Tibial artery (tissue), 4 donors: ENCODE measurements at regions of chr13 and their contacts with region 1.

Region 1: GRCh38 chr13:40922437-40923040 is 96.6 kb downstream of the ELF1 start:
- DNase-seq: no peak
- H3K4me3 ChIP-seq: no peak overlapping the region
- H3K27ac ChIP-seq: no peak overlapping the region
- H3K4me1 ChIP-seq: peaks cover 0 to 14% (median 5%) of the 10 kb centered on the region in 4 donors
- H3K27me3 ChIP-seq: no peaks in the 10 kb centered on the region
- CTCF ChIP-seq: no peak

Region 2: DNA sequence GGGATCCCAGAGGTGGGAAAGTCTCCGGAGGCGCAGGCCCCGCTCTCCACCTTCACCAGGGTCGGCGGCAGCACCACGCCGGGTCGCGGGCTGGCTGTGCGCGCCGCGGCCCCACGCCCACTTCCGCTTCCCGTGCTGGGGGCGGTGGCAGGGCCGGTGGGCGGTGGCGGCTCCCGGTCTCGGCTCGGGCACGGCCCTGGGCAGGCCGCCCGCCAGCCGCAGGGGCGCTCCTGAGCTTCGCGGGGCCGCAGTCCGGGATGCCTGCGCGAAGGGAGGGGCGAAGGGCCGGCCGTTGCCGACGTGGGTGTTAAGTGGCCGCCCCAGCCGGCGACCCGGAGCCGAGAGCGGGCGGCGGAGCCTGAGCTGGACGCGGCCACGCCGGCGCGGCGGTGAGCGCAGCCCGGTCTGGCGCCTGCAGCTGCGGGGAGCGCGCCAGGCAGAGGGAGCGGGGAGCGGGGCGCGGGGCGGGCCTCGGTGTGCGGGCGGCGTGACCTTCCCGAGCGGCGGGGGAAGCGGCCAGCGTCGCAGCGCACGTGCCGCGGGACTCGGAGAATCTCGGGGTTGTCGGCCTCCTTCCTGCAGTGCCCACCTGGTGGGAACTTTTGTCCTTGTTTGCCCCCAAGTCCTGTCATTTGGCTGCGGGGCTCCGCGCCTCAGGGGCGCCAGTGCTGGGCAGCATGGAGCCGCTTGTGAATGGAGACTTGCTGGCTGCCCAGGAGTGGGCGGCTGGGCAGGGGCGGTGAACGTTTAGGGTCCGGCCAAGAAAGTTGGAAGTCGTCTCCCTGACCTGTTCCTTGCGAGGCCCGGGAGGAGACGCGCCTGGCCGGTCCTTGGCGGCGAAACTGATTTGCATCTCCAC is 133.0 kb before region 1 on chr13 and contains the start of gene SLC25A15:
- intact Hi-C with region 1: loop called (anchors 10 kb)
- DNase-seq: peak; percentile 73 to 85
- H3K4me3 ChIP-seq: peak within 1 kb of the TSS; percentile 67 to 71
- H3K27ac ChIP-seq: peak within 1 kb of the TSS; percentile 80 to 83
- H3K4me1 ChIP-seq: peaks cover 0 to 13% (median 4%) of the 10 kb centered on the region in 4 donors
- H3K27me3 ChIP-seq: no peaks in the 10 kb centered on the region
- CTCF ChIP-seq: peak in 1 of 2 experiments; percentile 28

Region 3: DNA sequence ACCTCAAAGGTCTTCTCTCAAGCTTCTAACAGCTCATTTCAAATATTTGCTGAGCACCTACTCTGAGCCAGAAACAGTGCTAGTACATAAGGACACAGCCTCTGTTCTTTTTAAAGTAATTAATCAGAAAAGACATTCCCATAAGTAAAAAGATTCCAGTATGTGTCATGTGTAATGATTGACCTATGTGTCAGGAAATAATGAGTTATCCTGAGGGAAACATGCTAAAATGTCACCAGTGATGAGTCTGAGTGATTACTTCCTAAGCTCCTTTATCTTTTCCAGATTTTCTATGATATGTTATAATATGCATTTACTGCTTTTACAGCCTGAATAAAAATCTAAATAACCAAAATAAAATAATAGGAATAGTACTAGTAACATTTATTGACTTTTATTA is 25.5 kb before region 1 on chr13:
- intact Hi-C with region 1: no loop called
- DNase-seq: no peak
- H3K4me3 ChIP-seq: no peak overlapping the region
- H3K27ac ChIP-seq: no peak overlapping the region
- H3K4me1 ChIP-seq: peaks cover 0 to 4% (median 0%) of the 10 kb centered on the region in 4 donors
- H3K27me3 ChIP-seq: no peaks in the 10 kb centered on the region
- CTCF ChIP-seq: no peak